ENCODE measurements at regions of chr7 and their contacts with region 1.

Region 1: GRCh38 chr7:48299580-48300169 is 128.4 kb downstream of the ABCA13 start:
- DNase-seq: peak; percentile 17
- ATAC-seq: peak; percentile 99
- H3K4me3 ChIP-seq: no peak overlapping the region
- H3K27ac ChIP-seq: no peak overlapping the region
- H3K4me1 ChIP-seq: peaks cover 5% of the 10 kb centered on the region; the same call in 1 of the 2 replicates
- H3K27me3 ChIP-seq: no peaks in the 10 kb centered on the region
- CTCF ChIP-seq: peak; percentile 66 to 76 (median 74)
- EP300 ChIP-seq: no peak
- POLR2A ChIP-seq: no peak
- RAD21 ChIP-seq: peak; percentile 89

Region 2: DNA sequence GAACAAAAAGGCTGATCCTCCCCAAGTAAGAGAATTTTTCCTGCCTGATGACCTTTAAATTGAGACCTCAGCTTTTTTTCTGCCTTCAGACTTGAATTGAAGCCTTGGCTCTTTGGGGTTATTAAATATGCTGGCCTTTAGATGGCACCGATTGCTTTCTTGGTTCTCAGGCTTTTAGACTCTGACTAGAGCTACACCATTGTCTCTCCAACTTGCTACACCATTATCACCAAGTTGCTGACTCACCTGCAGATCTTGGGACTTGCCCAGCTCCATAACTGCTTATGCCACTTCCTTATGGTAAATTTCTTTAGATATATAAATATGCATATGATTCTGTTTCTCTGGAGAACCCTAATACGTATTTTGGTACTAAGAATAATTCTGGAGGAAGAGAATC is 131.5 kb before region 1 on chr7:
- CTCF ChIA-PET with region 1: no interaction called
- POLR2A ChIA-PET with region 1: no interaction called
- RAD21 ChIA-PET with region 1: no interaction called
- SMC1A ChIA-PET with region 1: no interaction called
- in situ Hi-C with region 1: no loop called
- intact Hi-C with region 1: no loop called
- DNase-seq: no peak
- ATAC-seq: no peak
- H3K4me3 ChIP-seq: no peak overlapping the region
- H3K27ac ChIP-seq: no peak overlapping the region
- H3K4me1 ChIP-seq: no peaks in the 10 kb centered on the region
- H3K27me3 ChIP-seq: no peaks in the 10 kb centered on the region
- CTCF ChIP-seq: no peak
- EP300 ChIP-seq: no peak
- POLR2A ChIP-seq: no peak
- RAD21 ChIP-seq: peak; percentile 17; the same call in 1 of the 2 replicates

Region 3: GRCh38 chr7:48312151-48312550 is 12.5 kb after region 1 on chr7:
- CTCF ChIA-PET with region 1: interaction called, 13 read pairs
- POLR2A ChIA-PET with region 1: no interaction called
- RAD21 ChIA-PET with region 1: no interaction called
- SMC1A ChIA-PET with region 1: interaction called, 4 read pairs
- in situ Hi-C with region 1: no loop called
- intact Hi-C with region 1: no loop called
- DNase-seq: no peak
- ATAC-seq: no peak
- H3K4me3 ChIP-seq: no peak overlapping the region
- H3K27ac ChIP-seq: no peak overlapping the region
- H3K4me1 ChIP-seq: no peaks in the 10 kb centered on the region
- H3K27me3 ChIP-seq: 0 out of 4 replicates have a peak, but pooled peaks cover 0 to 2% of the 10 kb centered on the region in 2 experiments
- CTCF ChIP-seq: no peak
- EP300 ChIP-seq: no peak
- POLR2A ChIP-seq: no peak
- RAD21 ChIP-seq: no peak

Region 4: DNA sequence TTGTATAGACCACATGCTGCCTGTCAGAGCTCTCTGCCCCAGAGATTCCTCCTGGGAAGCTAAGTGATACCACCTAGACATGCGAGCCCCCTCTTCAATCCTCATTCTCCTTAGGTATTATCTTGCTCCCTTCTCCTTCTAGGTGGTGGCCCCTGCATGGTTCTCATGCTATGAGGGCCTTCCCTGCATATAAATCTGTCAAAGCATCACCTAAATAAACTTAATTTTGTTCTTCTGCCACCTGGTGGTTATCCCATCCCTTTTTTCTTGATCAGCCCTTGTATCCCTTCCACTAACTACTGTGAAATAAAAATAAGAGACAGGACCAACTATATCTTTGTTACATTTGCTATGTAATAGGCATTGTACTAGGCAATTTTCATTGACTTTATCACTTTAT is 866.8 kb after region 1 on chr7:
- CTCF ChIA-PET with region 1: interaction called, 6 read pairs
- POLR2A ChIA-PET with region 1: no interaction called
- RAD21 ChIA-PET with region 1: no interaction called
- SMC1A ChIA-PET with region 1: no interaction called
- in situ Hi-C with region 1: no loop called
- intact Hi-C with region 1: loop called (anchors 5 kb)
- DNase-seq: no peak
- ATAC-seq: peak; percentile 38; the same call in 2 of the 3 replicates
- H3K4me3 ChIP-seq: no peak overlapping the region
- H3K27ac ChIP-seq: no peak overlapping the region
- H3K4me1 ChIP-seq: no peaks in the 10 kb centered on the region
- H3K27me3 ChIP-seq: no peaks in the 10 kb centered on the region
- CTCF ChIP-seq: peak; percentile 5 to 12 (median 7); a peak in 1 of 6 replicates
- EP300 ChIP-seq: no peak
- POLR2A ChIP-seq: no peak
- RAD21 ChIP-seq: 0 out of 2 replicates have a peak, but pooled peaks have one; percentile 10

Region 5: DNA sequence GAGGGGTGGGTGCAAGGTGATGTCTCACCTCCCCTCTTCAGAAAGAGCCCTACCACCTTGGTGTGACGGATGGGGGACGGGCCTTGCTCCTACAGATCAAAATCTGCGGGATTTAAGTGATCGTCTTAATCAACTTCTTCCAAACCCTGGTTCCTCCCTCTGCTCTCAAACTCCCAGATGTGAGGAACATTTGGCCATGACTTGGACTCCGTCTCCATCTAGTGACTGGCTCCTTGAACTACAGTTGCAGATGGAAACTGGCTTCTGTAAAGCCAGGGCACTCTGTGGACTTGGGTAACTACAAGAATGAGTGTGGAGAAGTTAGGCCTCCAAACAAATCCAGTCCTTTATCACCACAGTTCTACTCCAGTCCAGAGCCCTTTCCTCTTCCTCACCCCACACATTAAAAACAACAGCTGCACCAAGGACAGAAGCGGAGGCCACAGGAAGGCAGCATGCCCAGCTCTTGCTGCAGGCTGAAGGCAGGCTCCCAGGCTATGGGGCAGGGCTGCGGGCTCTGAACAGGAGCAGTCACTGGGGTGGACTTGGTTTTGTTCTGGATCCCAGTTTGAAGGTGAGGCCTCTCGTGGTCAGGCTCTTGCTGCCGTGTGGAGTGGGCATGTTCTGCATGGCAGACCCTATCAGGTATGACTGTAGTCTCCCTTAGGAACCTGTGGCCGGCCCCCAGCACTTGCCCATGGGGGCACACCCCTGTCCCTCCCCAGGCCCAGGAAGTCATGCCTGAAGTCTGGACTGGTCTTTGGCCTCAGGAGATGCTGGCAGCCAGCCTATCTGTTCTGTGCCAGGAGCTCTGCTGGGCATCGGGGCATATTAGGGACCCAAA is 1553.2 kb after region 1 on chr7:
- CTCF ChIA-PET with region 1: interaction called, 5 read pairs
- POLR2A ChIA-PET with region 1: no interaction called
- RAD21 ChIA-PET with region 1: no interaction called
- SMC1A ChIA-PET with region 1: no interaction called
- in situ Hi-C with region 1: loop called (anchors 10 kb)
- intact Hi-C with region 1: loop called (anchors 1 kb)
- DNase-seq: no peak
- ATAC-seq: peak; percentile 88
- H3K4me3 ChIP-seq: no peak overlapping the region
- H3K27ac ChIP-seq: no peak overlapping the region
- H3K4me1 ChIP-seq: no peaks in the 10 kb centered on the region
- H3K27me3 ChIP-seq: peaks cover 0 to 3% of the 10 kb centered on the region in 2 experiments; a peak in 1 of 4 replicates
- CTCF ChIP-seq: peak; percentile 86 to 91 (median 86)
- EP300 ChIP-seq: no peak
- POLR2A ChIP-seq: no peak
- RAD21 ChIP-seq: peak; percentile 97